Dorsolateral prefrontal cortex (tissue), 120 donors: ENCODE measurements at regions of chr5 and their contacts with region 1.

Region 1: DNA sequence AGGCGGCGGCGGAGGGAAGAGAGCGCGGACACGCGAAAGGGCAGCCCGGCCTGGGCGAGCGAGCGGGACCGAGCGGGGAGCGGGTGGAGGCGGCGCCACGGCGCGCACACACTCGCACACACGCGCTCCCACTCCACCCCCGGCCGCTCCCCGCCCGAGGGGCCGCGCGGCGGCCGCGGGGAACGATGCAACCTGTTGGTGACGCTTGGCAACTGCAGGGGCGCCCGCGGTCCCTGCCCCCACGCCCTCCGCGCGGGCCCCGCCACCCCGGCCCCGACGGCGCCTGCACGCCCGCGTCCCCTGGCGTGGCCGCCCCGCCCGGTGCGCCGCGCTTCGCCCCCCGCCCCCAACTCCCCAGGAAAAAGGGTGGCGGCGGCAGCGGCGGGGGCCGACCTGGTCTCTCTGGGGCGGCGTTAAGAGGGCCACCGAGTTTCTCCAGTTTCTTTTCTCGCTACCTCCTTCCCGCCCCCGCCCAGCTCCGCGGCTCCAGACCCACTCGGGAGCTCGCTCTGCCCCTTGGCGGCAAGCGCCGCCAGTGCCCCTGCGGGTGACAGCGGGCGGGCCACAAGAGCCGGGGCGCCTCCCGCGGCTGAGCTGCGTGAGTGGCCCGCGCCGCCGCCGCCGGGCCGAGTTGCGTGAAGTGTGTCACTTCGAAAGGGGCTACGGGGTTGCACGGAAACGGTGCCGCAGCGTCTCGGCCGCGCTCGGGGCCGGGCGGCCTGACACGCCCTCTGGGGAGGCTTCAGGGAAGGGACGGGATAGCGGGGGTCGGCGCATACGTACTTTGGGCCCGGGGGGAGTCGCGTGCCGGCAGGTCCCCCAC is at the start of gene NR3C1:
- DNase-seq: peak; percentile 67 to 89 (median 80)
- H3K4me3 ChIP-seq: peak within 1 kb of the TSS; percentile 66 to 97 (median 88)
- H3K27ac ChIP-seq: peak within 1 kb of the TSS; percentile 79 to 100 (median 99)
- H3K27me3 ChIP-seq: no peaks in the 10 kb centered on the region
- CTCF ChIP-seq: peak in 55 of 56 donors; percentile 0 to 71 (median 46)
- total RNA-seq, gene NR3C1: 56.9 to 114 (median 87.8) TPM

Region 2: GRCh38 chr5:142769741-142770631 is 633.8 kb before region 1 on chr5 and contains the start of gene ARHGAP26:
- intact Hi-C with region 1: loop called in 1 of 2 experiments (anchors 5 kb)
- DNase-seq: peak; percentile 93 to 100 (median 98)
- H3K4me3 ChIP-seq: peak within 1 kb of the TSS; percentile 47 to 97 (median 88)
- H3K27ac ChIP-seq: peak within 1 kb of the TSS; percentile 53 to 96 (median 89)
- H3K27me3 ChIP-seq: no peaks in the 10 kb centered on the region
- CTCF ChIP-seq: peak in 43 of 56 donors; percentile 6 to 71 (median 39)
- total RNA-seq, gene ARHGAP26: 84.5 to 257 (median 180) TPM

Region 3: GRCh38 chr5:143063175-143063970 is 340.4 kb before region 1 on chr5:
- intact Hi-C with region 1: loop called in 1 of 2 experiments (anchors 5 kb)
- DNase-seq: peak in 3 of 10 donors; percentile 52 to 64 (median 61)
- H3K4me3 ChIP-seq: no peak overlapping the region
- H3K27ac ChIP-seq: peak overlapping the region in 56 of 59 donors; percentile 4 to 92 (median 76)
- H3K27me3 ChIP-seq: no peaks in the 10 kb centered on the region
- CTCF ChIP-seq: no peak

Region 4: GRCh38 chr5:143217065-143217803 is 186.6 kb before region 1 on chr5:
- intact Hi-C with region 1: loop called in 1 of 2 experiments (anchors 5 kb)
- DNase-seq: no peak
- H3K4me3 ChIP-seq: no peak overlapping the region
- H3K27ac ChIP-seq: peak overlapping the region in 2 of 59 donors; percentile 3 to 14
- H3K27me3 ChIP-seq: no peaks in the 10 kb centered on the region
- CTCF ChIP-seq: peak in 1 of 56 donors; percentile 15

Region 5: GRCh38 chr5:143824851-143825720 is 421.3 kb after region 1 on chr5:
- intact Hi-C with region 1: loop called (anchors 5 to 10 kb)
- DNase-seq: peak; percentile 70 to 87 (median 81)
- H3K4me3 ChIP-seq: no peak overlapping the region
- H3K27ac ChIP-seq: no peak overlapping the region
- H3K27me3 ChIP-seq: no peaks in the 10 kb centered on the region
- CTCF ChIP-seq: peak; percentile 88 to 99 (median 95)